Heart left ventricle (tissue), 16 donors: ENCODE measurements at regions of chr3 and their contacts with region 1.

Region 1: DNA sequence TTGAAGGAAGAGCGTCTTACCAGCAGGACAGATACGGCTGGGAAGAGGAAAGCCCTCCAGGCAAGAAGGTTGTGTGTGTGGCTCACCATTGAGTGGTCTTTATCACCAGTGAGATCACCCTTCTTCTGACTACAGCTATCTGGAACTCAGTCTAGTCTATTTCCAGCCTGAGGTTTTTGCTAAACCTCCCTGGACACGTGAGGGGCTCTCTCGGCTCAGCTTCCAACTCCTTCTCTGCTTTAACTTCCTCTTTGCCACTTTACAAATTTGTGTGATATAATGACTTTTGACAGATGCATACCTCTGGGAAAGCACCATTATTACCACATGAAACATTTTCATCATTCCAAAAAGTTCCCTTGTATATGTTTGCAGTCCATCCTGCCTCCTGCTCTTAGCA is 15.3 kb upstream of the ROPN1 start:
- DNase-seq: no peak
- ATAC-seq: no peak
- H3K4me3 ChIP-seq: no peak overlapping the region
- H3K27ac ChIP-seq: no peak overlapping the region
- H3K4me1 ChIP-seq: peaks cover 0 to 4% (median 0%) of the 10 kb centered on the region in 12 donors
- H3K27me3 ChIP-seq: peaks cover 0 to 6% (median 0%) of the 10 kb centered on the region in 9 donors
- CTCF ChIP-seq: no peak
- POLR2A ChIP-seq: no peak

Region 2: DNA sequence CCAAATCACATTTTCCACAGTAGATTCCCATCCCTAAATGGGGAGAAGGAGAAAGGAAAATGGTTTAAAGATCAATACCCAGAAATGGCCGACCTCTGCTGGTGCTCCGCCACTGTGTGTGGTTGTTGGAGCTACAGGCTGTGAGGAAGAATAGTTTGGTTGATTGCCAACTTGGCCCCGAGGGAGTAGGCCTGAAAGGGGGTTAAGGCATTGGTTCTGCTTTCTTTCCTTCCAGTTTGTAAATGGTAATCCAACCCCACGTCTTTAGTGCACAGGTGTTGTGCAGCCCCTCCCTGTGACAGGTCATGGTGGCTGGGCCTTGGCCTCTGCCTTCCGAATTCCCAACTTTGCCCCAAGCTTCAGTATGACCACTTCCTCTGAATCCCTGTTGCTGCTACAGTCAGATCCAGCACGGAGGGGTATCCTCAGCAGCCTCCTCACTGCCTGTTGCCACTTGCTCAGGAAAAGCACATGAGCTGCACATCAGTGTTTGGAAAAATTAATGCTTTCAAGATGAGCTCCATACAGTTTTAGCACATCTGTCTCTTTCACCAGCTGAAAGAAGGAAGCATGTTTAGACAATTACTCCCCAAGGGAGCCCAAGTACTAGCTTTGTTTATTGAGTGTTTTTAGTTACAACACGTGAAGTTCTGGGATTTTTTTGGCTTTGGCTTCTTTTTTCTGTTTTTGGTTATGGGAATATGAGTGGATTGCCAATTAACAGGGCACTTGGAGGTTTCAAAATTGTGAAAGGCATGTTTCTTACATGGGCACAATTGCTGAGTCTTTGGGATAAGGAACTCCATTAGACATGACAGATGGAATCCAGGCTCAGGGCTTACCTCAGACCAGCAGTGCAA is 77.1 kb after region 1 on chr3:
- intact Hi-C with region 1: loop called in 1 of 10 experiments (anchors 2 kb)
- DNase-seq: peak in 4 of 5 donors; percentile 27 to 43 (median 36)
- ATAC-seq: peak in 3 of 4 donors; percentile 30 to 64 (median 48)
- H3K4me3 ChIP-seq: no peak overlapping the region
- H3K27ac ChIP-seq: peak overlapping the region in 7 of 12 donors; percentile 0 to 53 (median 18)
- H3K4me1 ChIP-seq: peaks cover 0 to 41% (median 13%) of the 10 kb centered on the region in 12 donors
- H3K27me3 ChIP-seq: no peaks in the 10 kb centered on the region
- CTCF ChIP-seq: no peak
- POLR2A ChIP-seq: no peak